Dendritic cell treated with granulocyte-macrophage colony-stimulating factor and Interleukin-4, amounts not matched to agents 40 ng/mL and 50 ng/mL, for 4 days (primary cell): ENCODE measurements at regions of chr13 and their contacts with region 1.

Region 1: GRCh38 chr13:80168089-80168850 is 172.7 kb downstream of the SPRY2 start:
- H3K4me3 Mint-ChIP-seq: no peak overlapping the region
- H3K27ac Mint-ChIP-seq: peak overlapping the region; percentile 84
- H3K4me1 Mint-ChIP-seq: peaks cover 53% of the 10 kb centered on the region
- H3K27me3 Mint-ChIP-seq: peaks cover 31% of the 10 kb centered on the region

Region 2: GRCh38 chr13:79810669-79811068 is 357.6 kb before region 1 on chr13:
- intact Hi-C with region 1: loop called (anchors 5 kb)
- H3K4me3 Mint-ChIP-seq: no peak overlapping the region
- H3K27ac Mint-ChIP-seq: no peak overlapping the region
- H3K4me1 Mint-ChIP-seq: peaks cover 24% of the 10 kb centered on the region
- H3K27me3 Mint-ChIP-seq: peaks cover 4% of the 10 kb centered on the region

Region 3: GRCh38 chr13:80037505-80037888 is 130.8 kb before region 1 on chr13:
- intact Hi-C with region 1: loop called (anchors 5 kb)
- H3K4me3 Mint-ChIP-seq: no peak overlapping the region
- H3K27ac Mint-ChIP-seq: no peak overlapping the region
- H3K4me1 Mint-ChIP-seq: peaks cover 52% of the 10 kb centered on the region
- H3K27me3 Mint-ChIP-seq: no peaks in the 10 kb centered on the region

Region 4: DNA sequence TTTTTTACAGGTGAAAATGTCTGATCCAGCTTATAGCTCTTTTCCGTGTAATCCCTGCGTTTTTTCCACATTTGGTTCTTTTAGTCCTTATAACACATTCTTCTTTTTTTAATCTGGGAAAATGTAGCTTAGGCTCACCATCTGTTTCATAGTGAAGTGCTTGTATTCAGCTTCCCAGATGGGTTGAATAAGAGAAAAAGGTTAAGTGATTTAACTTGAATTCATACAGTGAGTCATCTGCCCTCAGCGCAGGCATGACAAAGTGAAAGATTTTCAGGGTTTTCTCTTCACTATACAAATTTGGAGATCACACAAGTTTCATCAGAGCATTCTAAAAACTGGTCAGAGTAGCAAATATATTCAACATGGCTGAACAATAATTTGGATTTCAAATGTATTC is 52.2 kb before region 1 on chr13:
- intact Hi-C with region 1: no loop called
- H3K4me3 Mint-ChIP-seq: no peak overlapping the region
- H3K27ac Mint-ChIP-seq: no peak overlapping the region
- H3K4me1 Mint-ChIP-seq: no peaks in the 10 kb centered on the region
- H3K27me3 Mint-ChIP-seq: no peaks in the 10 kb centered on the region

Region 5: DNA sequence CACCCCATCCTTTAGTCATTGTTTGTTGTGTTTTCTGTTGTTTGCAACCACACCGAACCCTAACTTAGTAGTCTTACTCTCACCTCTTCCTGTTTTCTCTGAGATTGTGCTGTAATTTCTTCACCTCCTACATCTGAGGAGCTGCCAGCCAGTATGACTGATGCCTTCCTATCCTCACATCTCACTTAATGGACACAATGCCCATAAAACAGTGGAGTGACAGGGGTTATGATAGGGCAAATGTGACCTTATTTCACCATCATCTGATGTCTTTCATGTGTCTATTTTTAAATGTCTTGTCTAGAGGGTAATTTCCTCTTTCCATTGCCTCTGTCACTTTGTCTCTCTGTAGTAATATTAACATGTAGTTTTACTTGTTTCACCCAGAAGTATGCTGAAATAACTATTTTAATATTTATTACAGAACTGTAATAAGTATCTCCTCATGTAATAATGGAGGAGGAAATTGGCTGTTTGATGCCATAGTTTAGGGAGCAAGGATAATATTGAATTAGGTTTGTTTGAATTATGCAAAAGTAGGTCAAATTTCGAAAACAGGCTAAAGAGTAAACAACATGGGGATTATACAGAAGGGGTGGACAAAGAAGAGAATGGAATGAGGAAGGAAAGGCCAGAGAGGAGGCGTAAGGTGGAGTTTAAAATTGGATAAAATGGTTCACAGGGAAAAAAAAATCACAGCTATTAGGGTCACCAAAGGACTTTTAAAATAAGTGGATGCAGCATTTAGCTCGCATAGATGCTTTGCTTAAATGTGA is 276.2 kb after region 1 on chr13:
- intact Hi-C with region 1: loop called (anchors 5 kb)
- H3K4me3 Mint-ChIP-seq: no peak overlapping the region
- H3K27ac Mint-ChIP-seq: no peak overlapping the region
- H3K4me1 Mint-ChIP-seq: peaks cover 45% of the 10 kb centered on the region
- H3K27me3 Mint-ChIP-seq: peaks cover 71% of the 10 kb centered on the region

Region 6: GRCh38 chr13:80454245-80454644 is 286.0 kb after region 1 on chr13:
- intact Hi-C with region 1: loop called (anchors 5 kb)
- H3K4me3 Mint-ChIP-seq: no peak overlapping the region
- H3K27ac Mint-ChIP-seq: no peak overlapping the region
- H3K4me1 Mint-ChIP-seq: peaks cover 51% of the 10 kb centered on the region
- H3K27me3 Mint-ChIP-seq: peaks cover 88% of the 10 kb centered on the region